PC-3 (cell line): ENCODE measurements at regions of chr6 and their contacts with region 1.

Region 1: DNA sequence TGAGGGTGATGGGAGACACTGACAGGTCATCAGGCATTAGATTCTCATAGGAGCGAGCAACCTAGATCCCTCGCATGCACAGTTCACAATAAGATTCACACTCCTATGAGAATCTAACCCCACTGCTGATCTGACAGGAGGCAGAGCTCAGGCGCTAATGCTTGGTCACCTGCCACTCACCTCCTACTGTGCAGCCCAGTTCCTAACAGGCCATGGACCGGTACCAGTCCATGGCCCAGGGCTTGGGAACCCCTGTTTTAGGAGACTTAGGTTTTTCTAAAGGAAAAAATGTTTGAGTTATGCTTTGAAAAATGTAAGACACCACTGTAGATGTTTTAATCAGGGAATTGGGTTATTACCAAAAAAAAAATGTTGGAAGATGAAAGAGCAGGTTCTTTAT is 6.7 kb downstream of the HLA-E start:
- DNase-seq: no peak
- ATAC-seq: no peak
- H3K4me3 ChIP-seq: no peak overlapping the region
- H3K27ac ChIP-seq: peak overlapping the region; percentile 40
- H3K4me1 ChIP-seq: peaks cover 18% of the 10 kb centered on the region
- H3K27me3 ChIP-seq: no peaks in the 10 kb centered on the region
- CTCF ChIP-seq: no peak

Region 2: DNA sequence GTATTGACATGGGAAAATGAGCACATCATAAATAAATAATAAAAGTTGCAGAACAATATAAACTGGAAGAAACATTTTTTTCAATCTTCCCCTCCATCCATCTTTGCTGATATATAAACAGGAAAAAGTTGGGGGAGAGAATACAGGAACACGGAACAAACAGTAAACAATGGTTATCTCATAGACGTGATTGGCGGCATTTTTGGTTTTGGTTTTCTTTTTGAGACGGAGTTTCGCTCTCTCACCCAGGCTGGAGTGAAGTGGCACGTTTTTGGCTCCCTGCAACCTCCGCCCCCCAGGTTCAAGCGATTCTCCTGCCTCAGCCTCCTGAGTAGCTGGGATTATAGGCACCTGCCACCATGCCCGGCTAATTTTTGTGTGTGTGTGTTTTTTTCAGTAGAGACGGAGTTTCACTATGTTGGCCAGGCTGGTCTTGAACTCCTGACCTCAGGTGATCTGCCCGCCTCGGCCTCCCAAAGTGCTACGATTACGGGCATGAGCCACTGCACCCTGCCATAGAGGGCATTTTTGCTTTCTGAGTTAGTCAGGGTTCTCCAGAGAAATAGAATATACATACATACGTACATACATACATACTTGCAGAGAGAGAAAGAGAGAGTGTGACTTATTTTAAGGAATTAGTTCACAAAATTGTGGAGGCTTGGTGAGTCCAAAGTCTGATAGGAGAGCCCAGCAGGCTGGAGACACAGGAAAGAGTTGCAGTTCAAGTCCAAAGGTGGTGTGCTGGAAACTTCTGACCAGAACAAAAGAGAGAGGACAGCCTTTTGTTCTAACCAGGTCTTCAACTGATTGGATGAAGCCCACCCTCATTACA is 37.7 kb after region 1 on chr6:
- CTCF ChIA-PET with region 1: interaction called, 8 read pairs
- POLR2A ChIA-PET with region 1: no interaction called
- intact Hi-C with region 1: loop called (anchors 1 kb)
- DNase-seq: no peak
- ATAC-seq: no peak
- H3K4me3 ChIP-seq: no peak overlapping the region
- H3K27ac ChIP-seq: no peak overlapping the region
- H3K4me1 ChIP-seq: peaks cover 19% of the 10 kb centered on the region
- H3K27me3 ChIP-seq: no peaks in the 10 kb centered on the region
- CTCF ChIP-seq: no peak